Cardiac septum (tissue), 1 donor: ENCODE measurements at regions of chr13 and their contacts with region 1.

Region 1: DNA sequence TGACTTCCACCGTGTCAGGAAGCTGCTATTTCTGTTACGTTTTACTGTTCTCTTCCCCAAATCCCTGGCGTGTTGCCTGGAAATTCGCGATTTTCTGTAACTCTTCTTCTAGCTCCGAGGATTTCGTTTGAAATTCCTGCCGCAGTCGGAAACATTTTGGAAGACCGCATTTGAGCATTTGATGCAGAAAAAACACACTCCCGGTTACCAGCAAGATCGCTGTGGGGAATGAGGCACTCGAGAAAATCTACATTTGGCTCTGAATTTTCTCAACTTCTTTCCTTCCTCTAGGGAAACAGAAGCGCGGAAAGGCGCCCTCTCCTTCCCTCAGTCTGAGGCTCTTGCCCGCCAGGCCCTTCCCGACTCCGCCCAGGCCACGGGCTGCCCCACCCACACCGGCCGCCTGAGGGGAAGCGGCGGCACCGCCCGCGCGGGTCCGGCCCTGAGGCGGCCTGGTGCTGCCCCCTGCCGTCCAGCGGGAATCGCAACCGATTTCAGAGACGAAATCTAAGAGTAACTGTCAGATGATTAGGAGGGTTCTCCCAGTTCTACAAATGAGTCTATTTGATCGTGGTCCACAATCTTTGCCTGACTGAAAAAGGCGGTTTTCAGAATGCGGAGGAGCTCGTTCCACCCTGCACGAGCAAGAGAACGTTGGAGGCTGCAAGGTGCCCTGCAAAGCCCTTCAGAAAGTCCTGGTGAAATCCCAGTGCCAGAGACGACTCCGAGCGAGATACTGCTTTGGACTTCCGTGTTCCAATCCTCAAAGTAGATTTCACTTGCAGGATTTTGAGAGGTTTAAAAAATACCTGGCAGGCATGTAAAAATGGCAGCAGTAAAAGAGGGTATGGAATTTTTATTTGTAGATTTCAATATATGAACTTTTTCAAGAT is 18.4 kb upstream of the TUBGCP3 start:
- DNase-seq: peak; percentile 97

Region 2: GRCh38 chr13:111474136-111475002 is 1132.0 kb before region 1 on chr13:
- intact Hi-C with region 1: loop called (anchors 5 kb)
- DNase-seq: no peak

Region 3: DNA sequence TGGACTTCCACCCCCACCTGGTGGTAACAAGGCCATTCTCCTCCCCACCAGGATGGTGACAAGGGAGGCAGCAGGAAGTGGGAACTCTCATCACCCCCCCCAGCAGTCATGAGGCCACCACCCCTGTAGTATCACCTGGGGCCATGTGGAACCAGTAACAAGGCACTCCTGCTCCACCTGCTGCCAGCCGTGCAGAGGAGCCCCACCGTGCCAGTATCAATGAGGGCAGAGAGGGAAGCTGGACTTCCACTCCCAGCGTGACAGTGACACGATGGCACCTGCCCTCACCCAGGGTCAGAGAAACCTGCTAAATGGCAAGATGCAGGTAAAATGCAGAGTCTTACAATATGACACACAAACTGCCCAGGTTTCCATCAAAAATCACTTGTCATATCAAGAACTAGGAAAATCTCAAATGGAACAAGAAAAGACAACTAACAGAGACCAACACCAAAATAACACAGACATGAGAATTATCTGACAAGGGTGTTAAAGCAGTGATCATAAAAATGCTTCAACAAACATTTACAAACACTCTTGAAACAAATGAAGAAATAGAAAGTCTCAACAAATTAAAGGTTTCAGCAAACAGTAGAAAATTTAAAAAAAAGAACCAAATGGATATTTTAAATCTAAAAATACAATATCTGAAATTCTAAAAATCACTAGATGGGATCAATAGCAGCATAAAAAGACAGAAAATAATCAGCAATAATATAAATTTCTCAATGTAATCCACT is 239.3 kb before region 1 on chr13:
- intact Hi-C with region 1: no loop called
- DNase-seq: no peak

Region 4: DNA sequence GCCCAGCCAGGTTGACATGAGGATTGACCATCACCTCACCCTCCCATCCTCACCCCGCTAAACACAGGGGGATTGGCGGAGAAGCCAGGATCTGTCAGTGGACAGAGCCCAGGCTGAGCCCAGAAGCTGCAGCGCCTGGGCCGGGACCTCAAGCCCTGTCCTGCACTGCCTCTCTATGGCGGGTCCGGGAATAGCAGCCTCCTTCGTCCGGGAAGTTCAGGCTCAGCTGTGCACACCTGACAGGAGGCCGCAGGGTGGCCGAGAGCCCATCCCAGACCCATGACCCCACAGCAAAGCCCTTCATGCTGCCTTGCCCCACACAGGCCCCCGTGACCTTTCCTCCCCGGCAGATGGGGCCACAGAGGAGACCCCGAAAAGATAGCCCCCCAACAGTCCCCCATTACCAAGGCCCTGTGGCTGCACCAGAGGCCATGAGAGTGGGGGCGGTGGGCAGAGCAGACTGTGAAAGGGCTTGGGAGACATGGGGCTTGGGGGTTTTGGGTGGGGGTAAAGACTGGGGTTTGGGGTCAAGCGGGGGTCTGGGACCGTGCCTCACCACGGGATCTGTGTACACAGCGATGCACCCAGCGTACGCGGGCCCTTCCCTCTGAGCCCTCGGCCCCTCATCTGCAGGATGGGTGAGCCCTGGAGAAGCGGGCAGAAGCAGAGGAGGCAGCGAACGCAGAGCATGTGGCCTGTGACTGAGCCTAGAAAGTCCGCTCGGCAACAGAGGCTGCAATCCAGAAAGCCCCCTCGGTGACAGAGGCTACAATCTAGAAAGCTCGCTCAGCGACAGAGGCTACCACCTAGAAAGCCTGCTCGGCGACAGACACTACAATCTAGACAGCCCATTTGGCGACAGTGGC is 162.1 kb before region 1 on chr13:
- intact Hi-C with region 1: loop called (anchors 10 kb)
- DNase-seq: peak; percentile 70

Region 5: DNA sequence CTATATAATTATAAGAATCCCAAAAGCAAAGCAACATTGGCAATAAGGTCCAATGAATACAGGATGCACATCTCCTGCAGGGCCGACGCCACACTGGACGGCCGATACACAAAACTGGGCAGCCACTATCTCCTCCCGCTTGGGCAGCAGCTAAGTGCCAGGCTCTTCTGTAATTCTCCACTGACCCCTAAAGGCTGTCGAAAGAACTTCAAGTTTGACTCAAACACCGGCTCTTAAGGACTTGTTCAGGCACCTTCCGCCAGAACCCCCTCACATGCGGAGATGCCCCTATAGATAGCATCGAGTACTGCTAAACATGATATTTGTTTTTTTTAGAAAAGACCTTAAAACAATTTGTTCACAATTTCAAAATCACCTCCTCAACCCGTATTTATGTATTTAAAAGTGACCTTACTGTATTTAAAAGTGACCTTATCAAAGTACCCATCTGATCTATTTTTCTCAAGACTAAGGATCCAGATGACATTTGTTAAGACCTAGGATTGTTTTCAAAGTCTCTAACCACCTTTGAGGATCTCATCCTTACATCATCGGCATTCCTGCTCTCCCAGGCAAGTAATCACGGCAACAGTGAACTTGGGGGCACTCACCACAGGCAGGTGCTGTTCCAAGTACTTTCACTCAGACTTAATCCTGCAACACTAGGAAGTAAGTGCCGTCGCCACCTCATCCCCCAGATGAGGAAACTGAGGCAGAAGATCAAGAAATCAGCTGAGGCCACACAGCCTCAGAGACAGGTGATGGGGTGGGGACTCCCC is 96.2 kb before region 1 on chr13:
- intact Hi-C with region 1: loop called (anchors 10 kb)
- DNase-seq: no peak

Region 6: DNA sequence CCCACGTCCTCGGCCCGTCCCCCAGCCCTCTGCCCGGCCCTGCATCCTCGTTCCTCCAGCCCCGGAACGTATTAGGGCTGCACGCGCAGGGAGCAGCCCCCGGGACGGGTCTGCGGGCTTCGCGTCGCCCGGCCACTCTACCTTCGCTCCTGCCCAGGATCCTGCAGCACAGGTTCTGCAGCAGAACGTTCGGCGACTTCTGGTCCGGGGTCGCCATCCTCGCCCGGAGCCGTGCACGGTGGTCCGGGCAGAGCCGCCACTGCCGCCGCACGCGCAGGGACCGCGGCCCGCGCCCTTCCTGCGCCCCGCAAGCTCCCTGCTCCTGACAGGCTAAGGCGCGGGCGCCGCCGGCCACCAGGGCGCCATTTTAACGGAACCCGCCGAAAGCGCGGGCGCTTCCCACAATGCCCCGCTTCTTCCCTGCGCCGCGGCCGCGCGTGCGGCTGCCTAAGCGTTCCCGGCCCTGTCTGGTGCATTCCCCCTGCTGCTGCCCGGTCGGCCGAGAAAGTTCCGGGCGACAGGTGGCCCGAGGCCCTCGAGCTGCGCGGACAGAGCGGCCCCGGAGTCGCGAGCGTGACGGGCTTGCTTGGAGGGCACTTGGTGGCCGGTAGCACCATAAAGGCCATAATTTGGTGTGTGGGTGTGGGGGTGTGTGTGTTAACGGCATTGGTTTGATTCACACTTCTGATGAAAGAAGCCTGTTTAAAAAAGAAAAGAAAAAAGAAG is 18.4 kb before region 1 on chr13 and contains the start of gene TUBGCP3:
- intact Hi-C with region 1: loop called (anchors 2 kb)
- DNase-seq: peak; percentile 93
- total RNA-seq, gene TUBGCP3: 20.7 TPM